Breast epithelium (tissue), 4 donors: ENCODE measurements at regions of chr1 and their contacts with region 1.

Region 1: DNA sequence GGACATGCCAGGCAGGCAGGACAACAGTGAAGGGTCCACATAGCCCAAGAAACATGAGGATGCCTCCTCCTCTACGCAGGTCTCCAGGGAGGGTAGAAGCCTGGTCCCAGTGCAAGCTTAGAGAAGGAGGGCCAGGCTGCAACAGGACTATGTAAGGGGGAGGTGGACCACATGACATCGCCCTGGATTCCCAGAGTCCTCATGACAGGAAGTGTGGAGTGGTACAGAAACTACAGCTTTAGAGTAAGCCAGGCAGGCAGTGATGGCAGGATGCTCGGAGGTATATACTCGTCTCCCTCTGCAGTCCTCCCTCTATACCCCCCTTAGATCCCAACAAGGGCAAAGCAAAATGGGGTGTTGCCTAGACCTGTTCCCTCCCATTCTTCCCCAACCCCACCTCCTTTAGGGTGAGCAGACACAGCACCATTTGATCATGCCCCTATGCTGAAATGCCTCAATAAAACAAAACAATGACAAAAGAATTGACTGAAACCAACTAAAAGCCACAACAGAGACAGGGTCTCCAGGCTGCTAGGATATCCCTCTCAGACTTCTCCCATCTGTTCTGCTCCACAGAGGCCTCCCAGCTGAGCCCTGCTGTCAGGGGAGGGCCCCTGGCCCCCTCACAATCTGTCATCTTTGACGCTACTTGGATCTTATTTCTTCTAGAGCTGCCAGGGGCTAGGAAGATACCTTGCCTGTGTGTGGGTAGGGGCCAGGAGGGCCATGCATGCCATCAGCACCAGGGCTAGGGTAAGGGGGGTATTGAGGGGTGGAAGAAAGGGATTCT is 13.1 kb downstream of the FAM78B start:
- DNase-seq: no peak
- H3K4me3 ChIP-seq: no peak overlapping the region
- H3K27ac ChIP-seq: no peak overlapping the region
- H3K4me1 ChIP-seq: no peaks in the 10 kb centered on the region
- H3K27me3 ChIP-seq: no peaks in the 10 kb centered on the region
- CTCF ChIP-seq: no peak
- POLR2A ChIP-seq: no peak

Region 2: GRCh38 chr1:166133276-166133841 is 20.4 kb before region 1 on chr1:
- intact Hi-C with region 1: no loop called
- DNase-seq: no peak
- H3K4me3 ChIP-seq: no peak overlapping the region
- H3K27ac ChIP-seq: no peak overlapping the region
- H3K4me1 ChIP-seq: no peaks in the 10 kb centered on the region
- H3K27me3 ChIP-seq: no peaks in the 10 kb centered on the region
- CTCF ChIP-seq: no peak
- POLR2A ChIP-seq: no peak

Region 3: DNA sequence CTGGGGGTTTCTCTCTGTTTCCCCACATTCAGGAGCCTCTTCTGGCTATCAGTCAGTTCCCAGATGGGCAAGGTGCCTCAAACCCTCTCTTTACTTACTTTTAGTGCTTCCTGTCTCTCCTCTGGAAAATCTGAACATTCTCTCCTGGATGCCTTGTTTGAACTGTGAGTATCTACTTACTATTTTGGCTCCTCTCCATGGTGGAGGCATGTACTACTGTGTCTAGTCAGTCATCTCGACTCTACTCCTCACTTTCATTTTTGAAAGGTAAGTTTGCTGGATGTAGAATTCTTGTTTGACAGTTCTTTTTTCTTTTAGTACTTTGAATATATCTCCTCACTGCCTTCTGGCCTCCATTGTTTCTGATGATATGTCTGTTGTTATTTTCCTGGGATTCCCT is 84.0 kb after region 1 on chr1:
- intact Hi-C with region 1: loop called (anchors 5 kb)
- DNase-seq: no peak
- H3K4me3 ChIP-seq: no peak overlapping the region
- H3K27ac ChIP-seq: no peak overlapping the region
- H3K4me1 ChIP-seq: no peaks in the 10 kb centered on the region
- H3K27me3 ChIP-seq: no peaks in the 10 kb centered on the region
- CTCF ChIP-seq: no peak
- POLR2A ChIP-seq: no peak